Naive thymus-derived CD4-positive, alpha-beta T cell (primary cell): ENCODE measurements at regions of chr13 and their contacts with region 1.

Region 1: DNA sequence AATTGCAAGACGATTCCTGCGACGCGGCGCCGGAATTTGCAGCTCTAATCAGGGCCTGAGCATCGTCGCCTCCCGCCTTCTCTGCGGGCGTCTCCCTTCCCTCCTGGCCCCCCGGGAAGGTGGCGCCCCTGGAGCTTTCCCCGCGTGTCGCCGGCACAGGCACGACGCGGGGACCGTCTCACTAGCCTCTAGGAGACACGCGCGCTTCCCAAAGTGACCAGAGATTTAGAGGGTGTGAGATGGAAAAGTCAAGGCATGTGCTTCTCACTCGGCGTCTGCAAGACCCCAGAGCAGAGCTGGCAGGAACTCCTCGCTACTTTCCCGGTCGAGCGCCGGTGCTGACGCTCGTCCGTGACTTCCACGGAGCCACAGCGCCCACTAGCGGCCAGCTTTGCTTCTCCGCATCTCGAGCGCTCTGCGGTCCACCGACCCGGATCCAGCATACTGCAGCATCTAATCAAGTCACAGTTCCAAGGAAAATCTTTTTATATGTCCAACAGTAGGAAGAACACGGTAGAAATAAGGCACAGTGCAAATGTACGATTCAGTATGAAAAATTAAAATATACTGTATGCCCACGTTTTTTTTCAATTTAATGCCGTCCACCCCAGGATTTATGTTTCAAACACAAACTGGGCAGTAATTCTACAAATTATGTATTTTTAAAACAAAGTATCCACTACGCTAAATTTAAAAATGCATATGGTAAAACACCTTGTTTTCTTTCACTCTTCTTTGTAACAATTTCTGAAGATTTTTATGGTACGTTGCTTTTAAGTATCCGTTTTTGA is 977 bp upstream of the EFNB2 start:
- DNase-seq: peak; percentile 63 to 90 (median 83)
- ATAC-seq: peak; percentile 66
- H3K4me3 ChIP-seq: peak overlapping the region; percentile 78
- H3K4me3 Mint-ChIP-seq: peak overlapping the region; percentile 87 to 98 (median 95)
- H3K27ac ChIP-seq: peak overlapping the region; percentile 12
- H3K27ac Mint-ChIP-seq: peak overlapping the region in 7 of 9 donors; percentile 52 to 86 (median 77)
- H3K4me1 ChIP-seq: peaks cover 5 to 19% of the 10 kb centered on the region in 2 donors
- H3K4me1 Mint-ChIP-seq: peaks cover 10 to 24% (median 19%) of the 10 kb centered on the region in 7 donors
- H3K27me3 ChIP-seq: no peaks in the 10 kb centered on the region
- H3K27me3 Mint-ChIP-seq: peaks cover 20 to 33% (median 24%) of the 10 kb centered on the region in 5 donors

Region 2: DNA sequence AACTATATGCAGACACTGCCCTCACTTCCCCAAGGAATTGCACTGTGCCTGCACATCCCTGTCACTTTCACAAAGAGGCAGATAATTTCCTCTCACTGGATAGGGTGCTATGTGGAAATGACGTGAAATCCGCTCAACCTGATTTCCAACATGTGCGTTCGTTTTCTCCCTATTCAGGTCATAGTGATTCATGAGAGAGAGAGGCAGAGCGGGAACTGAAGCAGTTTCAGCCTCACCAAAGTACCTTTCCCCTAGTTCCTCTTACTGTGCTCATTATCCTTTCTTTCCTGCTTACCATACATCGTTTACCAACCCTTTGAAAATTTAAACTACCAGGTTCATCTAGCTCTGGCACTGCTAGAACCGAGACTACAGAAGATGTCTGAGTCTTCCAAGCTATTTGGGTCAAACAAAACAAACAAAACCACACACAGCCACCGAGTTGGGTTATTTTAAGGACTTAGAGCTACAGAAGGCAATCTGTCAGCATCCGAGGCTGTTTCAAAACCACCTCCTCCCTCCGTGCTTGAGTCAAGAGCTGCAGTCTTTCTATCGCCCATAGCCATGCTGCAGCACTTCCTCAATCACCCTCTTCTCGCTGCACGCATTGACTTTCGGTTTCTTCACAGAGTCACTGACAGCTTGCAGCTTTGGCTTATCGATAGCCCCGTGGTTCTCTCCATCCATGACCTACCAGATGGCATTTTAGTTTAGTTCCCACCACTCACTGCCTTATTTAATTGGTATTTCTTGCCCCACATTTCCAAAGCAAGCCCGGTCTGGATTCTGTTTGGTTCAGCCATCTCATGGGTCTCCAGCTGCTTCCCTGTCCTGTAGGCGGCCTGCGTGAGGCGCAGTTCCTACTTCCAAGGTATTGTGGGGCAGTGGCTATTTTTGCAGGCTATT is 1396.8 kb before region 1 on chr13:
- CTCF ChIA-PET with region 1: interaction called, 3 read pairs
- POLR2A ChIA-PET with region 1: no interaction called
- intact Hi-C with region 1: loop called in 1 of 2 experiments (anchors 1 kb)
- DNase-seq: peak; percentile 16 to 76 (median 66)
- ATAC-seq: peak; percentile 93
- H3K4me3 ChIP-seq: peak overlapping the region; percentile 63
- H3K4me3 Mint-ChIP-seq: peak overlapping the region; percentile 85 to 98 (median 94)
- H3K27ac ChIP-seq: peak overlapping the region; percentile 74
- H3K27ac Mint-ChIP-seq: peak overlapping the region; percentile 94 to 99 (median 96)
- H3K4me1 ChIP-seq: peaks cover 0 to 5% of the 10 kb centered on the region in 2 donors
- H3K4me1 Mint-ChIP-seq: peaks cover 5 to 22% (median 17%) of the 10 kb centered on the region in 7 donors
- H3K27me3 ChIP-seq: no peaks in the 10 kb centered on the region
- H3K27me3 Mint-ChIP-seq: peaks cover 0 to 5% (median 0%) of the 10 kb centered on the region in 5 donors

Region 3: GRCh38 chr13:105838231-105838630 is 698.2 kb before region 1 on chr13:
- CTCF ChIA-PET with region 1: no interaction called
- POLR2A ChIA-PET with region 1: no interaction called
- intact Hi-C with region 1: no loop called
- DNase-seq: no peak
- ATAC-seq: no peak
- H3K4me3 ChIP-seq: no peak overlapping the region
- H3K4me3 Mint-ChIP-seq: no peak overlapping the region
- H3K27ac ChIP-seq: no peak overlapping the region
- H3K27ac Mint-ChIP-seq: no peak overlapping the region
- H3K4me1 ChIP-seq: no peaks in the 10 kb centered on the region
- H3K4me1 Mint-ChIP-seq: no peaks in the 10 kb centered on the region
- H3K27me3 ChIP-seq: no peaks in the 10 kb centered on the region
- H3K27me3 Mint-ChIP-seq: no peaks in the 10 kb centered on the region

Region 4: GRCh38 chr13:105952233-105952972 is 584.0 kb before region 1 on chr13:
- CTCF ChIA-PET with region 1: no interaction called
- POLR2A ChIA-PET with region 1: no interaction called
- intact Hi-C with region 1: no loop called
- DNase-seq: no peak
- ATAC-seq: no peak
- H3K4me3 ChIP-seq: no peak overlapping the region
- H3K4me3 Mint-ChIP-seq: no peak overlapping the region
- H3K27ac ChIP-seq: no peak overlapping the region
- H3K27ac Mint-ChIP-seq: no peak overlapping the region
- H3K4me1 ChIP-seq: no peaks in the 10 kb centered on the region
- H3K4me1 Mint-ChIP-seq: peaks cover 0 to 3% (median 0%) of the 10 kb centered on the region in 7 donors
- H3K27me3 ChIP-seq: no peaks in the 10 kb centered on the region
- H3K27me3 Mint-ChIP-seq: peaks cover 0 to 6% (median 5%) of the 10 kb centered on the region in 5 donors

Region 5: DNA sequence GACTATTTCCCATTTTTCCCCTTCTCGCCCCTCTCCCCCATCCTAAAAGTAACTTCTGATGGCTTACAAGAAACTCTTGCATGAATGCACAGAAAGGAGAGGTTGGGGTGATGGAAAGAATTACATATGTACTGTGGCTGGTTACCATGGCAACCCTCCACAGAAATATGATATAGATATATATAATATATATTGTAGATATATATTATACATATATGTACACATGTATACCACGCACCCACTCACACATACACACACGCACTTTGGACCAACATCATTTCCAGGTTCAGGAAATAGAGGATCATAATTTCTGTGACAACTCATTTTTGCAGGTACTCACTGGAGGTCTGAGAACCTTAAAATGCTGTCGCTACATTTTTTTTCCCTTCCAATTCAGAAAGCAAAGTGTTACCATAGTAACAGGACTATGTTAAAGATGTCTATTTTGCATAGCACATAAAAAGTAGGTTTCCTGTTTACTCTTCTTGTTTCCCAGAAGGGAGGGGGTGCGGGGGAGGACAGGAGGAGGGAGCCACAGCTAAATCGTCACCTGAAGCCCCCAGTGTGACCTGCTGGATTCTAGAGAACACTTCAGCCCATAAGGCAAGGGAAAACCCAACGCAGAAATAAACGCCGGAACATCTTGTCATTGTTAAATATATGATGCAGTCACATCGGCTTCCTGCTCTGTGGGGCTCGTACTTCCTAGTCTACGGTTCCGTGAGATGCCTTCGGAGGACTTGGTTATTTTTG is 45.7 kb before region 1 on chr13:
- CTCF ChIA-PET with region 1: no interaction called
- POLR2A ChIA-PET with region 1: no interaction called
- intact Hi-C with region 1: loop called in 1 of 2 experiments (anchors 2 kb)
- DNase-seq: peak in 5 of 9 donors; percentile 1 to 20 (median 6)
- ATAC-seq: peak; percentile 46
- H3K4me3 ChIP-seq: no peak overlapping the region
- H3K4me3 Mint-ChIP-seq: peak overlapping the region in 9 of 10 donors; percentile 28 to 80 (median 70)
- H3K27ac ChIP-seq: no peak overlapping the region
- H3K27ac Mint-ChIP-seq: peak overlapping the region in 2 of 9 donors; percentile 16 to 51
- H3K4me1 ChIP-seq: no peaks in the 10 kb centered on the region
- H3K4me1 Mint-ChIP-seq: peaks cover 8 to 29% (median 26%) of the 10 kb centered on the region in 7 donors
- H3K27me3 ChIP-seq: no peaks in the 10 kb centered on the region
- H3K27me3 Mint-ChIP-seq: peaks cover 62 to 81% (median 74%) of the 10 kb centered on the region in 5 donors

Region 6: DNA sequence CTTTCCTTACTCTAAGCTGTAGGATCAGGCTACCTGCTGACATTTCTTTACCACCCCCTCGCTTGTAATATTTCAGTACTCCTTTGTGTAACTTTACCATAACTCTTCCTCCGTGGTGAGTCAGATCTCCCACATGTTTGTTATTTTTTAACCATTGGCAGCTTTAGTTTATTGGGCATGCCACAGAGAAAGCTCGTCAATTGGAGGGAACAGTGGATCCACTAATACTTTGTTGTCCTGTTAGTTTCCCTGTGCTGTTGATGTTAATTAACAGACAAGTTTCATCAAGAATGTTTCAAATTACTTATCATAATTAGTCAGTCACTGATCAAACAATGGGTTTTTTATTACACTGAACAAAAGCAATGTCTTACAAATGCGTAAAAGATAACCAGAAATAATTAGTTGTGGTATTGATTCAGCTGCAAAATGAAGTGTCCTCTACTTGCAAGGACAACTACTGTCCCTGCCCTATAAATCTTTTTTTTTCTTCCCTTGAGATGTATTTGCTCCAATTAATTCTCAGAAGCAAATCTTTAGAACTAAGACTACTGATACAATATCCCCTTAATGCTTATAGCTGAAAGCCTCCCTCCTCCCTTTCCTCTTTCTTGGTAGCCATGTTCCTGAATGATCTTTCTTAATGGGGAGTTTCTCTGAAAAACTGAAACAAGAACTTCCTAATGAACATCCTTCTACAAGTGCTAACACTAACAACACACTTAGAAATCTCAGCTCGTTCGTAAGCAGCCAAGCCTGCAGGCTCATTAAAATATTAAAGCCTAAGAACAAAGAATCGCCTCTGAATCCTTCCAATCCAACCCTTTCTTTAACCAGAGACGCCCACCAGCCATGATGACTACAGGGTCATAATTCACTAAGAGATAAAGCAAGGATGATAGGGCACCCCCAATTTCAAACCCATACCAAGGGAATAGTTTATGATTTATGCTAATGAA is 23.1 kb before region 1 on chr13:
- CTCF ChIA-PET with region 1: no interaction called
- POLR2A ChIA-PET with region 1: no interaction called
- intact Hi-C with region 1: no loop called
- DNase-seq: no peak
- ATAC-seq: no peak
- H3K4me3 ChIP-seq: no peak overlapping the region
- H3K4me3 Mint-ChIP-seq: no peak overlapping the region
- H3K27ac ChIP-seq: no peak overlapping the region
- H3K27ac Mint-ChIP-seq: no peak overlapping the region
- H3K4me1 ChIP-seq: no peaks in the 10 kb centered on the region
- H3K4me1 Mint-ChIP-seq: peaks cover 0 to 1% (median 0%) of the 10 kb centered on the region in 7 donors
- H3K27me3 ChIP-seq: peaks cover 0 to 3% of the 10 kb centered on the region in 2 donors
- H3K27me3 Mint-ChIP-seq: peaks cover 19 to 40% (median 27%) of the 10 kb centered on the region in 5 donors

Region 7: DNA sequence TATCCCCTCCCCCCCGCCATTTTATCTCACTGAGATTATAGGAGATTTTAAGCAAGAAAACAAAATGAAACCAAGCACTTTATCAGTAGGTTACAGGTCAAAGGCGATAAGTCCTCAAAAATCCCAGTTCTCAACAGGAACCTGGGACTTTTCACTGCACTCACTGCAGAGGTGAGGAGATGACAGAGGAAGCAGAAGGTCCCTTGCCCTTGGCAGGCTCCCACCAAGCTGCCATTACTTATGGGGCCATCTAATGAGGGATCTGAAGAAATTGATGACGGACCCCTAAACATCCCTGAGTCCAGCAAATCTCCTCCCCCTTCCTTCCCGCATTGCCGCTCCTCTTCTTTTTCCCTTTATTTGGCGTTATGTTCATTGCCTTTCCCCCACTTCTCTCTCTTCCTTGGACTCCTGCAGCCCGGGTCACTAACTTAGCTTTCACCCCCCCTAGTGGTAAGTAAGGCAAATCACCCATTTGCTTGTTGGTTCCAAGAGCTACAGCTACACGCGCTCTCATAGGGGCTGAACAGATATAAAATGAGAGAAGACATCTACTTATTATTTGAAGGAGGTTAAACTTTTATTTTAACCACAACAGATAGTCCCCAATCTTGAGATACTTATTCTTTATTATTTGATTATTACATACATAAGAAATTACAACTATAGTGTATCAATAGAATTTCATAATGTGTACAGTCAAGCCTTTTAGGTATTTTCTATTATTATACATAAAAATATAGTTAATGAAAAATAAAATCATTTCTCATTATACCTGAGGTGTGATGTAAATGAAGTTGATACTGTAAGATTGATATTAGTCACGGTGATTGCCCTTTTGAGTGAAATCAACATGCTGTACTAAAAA is 83.5 kb after region 1 on chr13:
- CTCF ChIA-PET with region 1: interaction called, 5 read pairs
- POLR2A ChIA-PET with region 1: no interaction called
- intact Hi-C with region 1: loop called in 1 of 2 experiments (anchors 2 kb)
- DNase-seq: peak in 7 of 9 donors; percentile 12 to 52 (median 40)
- ATAC-seq: peak; percentile 82
- H3K4me3 ChIP-seq: no peak overlapping the region
- H3K4me3 Mint-ChIP-seq: peak overlapping the region in 4 of 10 donors; percentile 0 to 42 (median 6)
- H3K27ac ChIP-seq: no peak overlapping the region
- H3K27ac Mint-ChIP-seq: no peak overlapping the region
- H3K4me1 ChIP-seq: no peaks in the 10 kb centered on the region
- H3K4me1 Mint-ChIP-seq: peaks cover 0 to 6% (median 5%) of the 10 kb centered on the region in 7 donors
- H3K27me3 ChIP-seq: no peaks in the 10 kb centered on the region
- H3K27me3 Mint-ChIP-seq: peaks cover 21 to 37% (median 23%) of the 10 kb centered on the region in 5 donors

Region 8: GRCh38 chr13:108218044-108218974 is 1681.9 kb after region 1 on chr13 and contains the start of gene ABHD13:
- CTCF ChIA-PET with region 1: no interaction called
- POLR2A ChIA-PET with region 1: no interaction called
- intact Hi-C with region 1: loop called in 1 of 2 experiments (anchors 10 kb)
- DNase-seq: peak; percentile 88 to 98 (median 93)
- ATAC-seq: peak; percentile 81
- H3K4me3 ChIP-seq: peak within 1 kb of the TSS; percentile 98
- H3K4me3 Mint-ChIP-seq: peak within 1 kb of the TSS; percentile 92 to 98 (median 96)
- H3K27ac ChIP-seq: peak within 1 kb of the TSS; percentile 79
- H3K27ac Mint-ChIP-seq: peak within 1 kb of the TSS; percentile 95 to 98 (median 96)
- H3K4me1 ChIP-seq: peaks cover 34 to 50% of the 10 kb centered on the region in 2 donors
- H3K4me1 Mint-ChIP-seq: peaks cover 16 to 77% (median 72%) of the 10 kb centered on the region in 7 donors
- H3K27me3 ChIP-seq: no peaks in the 10 kb centered on the region
- H3K27me3 Mint-ChIP-seq: peaks cover 0 to 4% (median 0%) of the 10 kb centered on the region in 5 donors
- total RNA-seq, gene ABHD13: 10.3 to 19.8 (median 12.7) TPM